Panc1 (cell line): ENCODE measurements at regions of chr2 and their contacts with region 1.

Region 1: DNA sequence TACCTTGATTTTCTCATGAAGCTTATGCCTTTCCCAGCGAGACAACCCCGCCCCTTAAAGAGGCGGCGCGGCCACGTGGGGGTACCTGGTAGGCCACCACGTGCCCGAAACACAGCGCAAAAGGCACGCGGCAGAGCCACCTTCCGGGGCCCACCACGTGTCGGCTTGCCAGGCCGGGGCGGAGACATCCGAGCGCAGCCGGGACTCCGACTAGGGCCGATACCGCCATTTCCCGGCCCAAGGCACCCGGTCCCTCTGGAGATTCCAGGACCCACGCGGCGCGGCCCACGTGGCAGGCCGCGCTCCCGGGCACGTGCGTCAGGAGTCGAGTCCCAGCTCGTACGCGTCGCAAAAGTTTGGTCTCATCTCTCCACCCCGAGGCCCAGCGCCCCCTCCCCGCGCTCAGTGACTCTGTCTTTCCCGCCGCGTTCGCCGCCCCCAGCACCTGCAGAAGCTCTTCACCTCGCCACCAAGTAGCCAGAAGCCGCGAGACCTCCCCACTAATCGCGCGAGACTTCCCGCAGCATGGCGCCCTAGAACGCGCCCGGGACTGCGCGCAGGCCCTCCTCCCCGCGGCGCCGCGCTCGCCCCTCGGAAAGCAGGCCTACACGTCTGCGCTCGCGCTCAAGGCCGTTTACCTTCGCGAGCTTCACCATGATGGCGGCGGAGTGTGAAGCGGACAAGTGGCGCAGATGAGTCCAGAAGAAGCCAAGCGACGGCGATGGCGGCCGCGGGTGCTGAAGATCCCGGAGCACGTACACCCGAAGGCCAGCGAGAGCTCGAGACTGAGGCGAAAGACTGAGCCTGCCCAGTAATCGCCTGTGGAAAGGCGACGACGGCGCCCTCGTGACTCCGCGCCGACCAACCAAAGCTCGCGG is at the start of gene NCL:
- DNase-seq: peak; percentile 80
- ATAC-seq: peak; percentile 95
- H3K4me3 ChIP-seq: peak within 1 kb of the TSS; percentile 93 to 100
- H3K27ac ChIP-seq: peak within 1 kb of the TSS; percentile 98
- H3K4me1 ChIP-seq: peaks cover 19% of the 10 kb centered on the region
- H3K27me3 ChIP-seq: no peaks in the 10 kb centered on the region
- CTCF ChIP-seq: no peak
- total RNA-seq, gene NCL: 778 TPM

Region 2: GRCh38 chr2:231425291-231425810 is 38.6 kb before region 1 on chr2:
- CTCF ChIA-PET with region 1: no interaction called
- POLR2A ChIA-PET with region 1: interaction called, 10 read pairs
- in situ Hi-C with region 1: no loop called
- intact Hi-C with region 1: no loop called
- DNase-seq: no peak
- ATAC-seq: peak; percentile 55
- H3K4me3 ChIP-seq: no peak overlapping the region
- H3K27ac ChIP-seq: peak overlapping the region; percentile 27; the same call in 1 of the 2 replicates
- H3K4me1 ChIP-seq: peaks cover 10% of the 10 kb centered on the region
- H3K27me3 ChIP-seq: no peaks in the 10 kb centered on the region
- CTCF ChIP-seq: no peak

Region 3: GRCh38 chr2:231436957-231437356 is 27.0 kb before region 1 on chr2:
- CTCF ChIA-PET with region 1: no interaction called
- POLR2A ChIA-PET with region 1: interaction called, 17 read pairs
- in situ Hi-C with region 1: no loop called
- intact Hi-C with region 1: no loop called
- DNase-seq: no peak
- ATAC-seq: no peak; the same call in 1 of the 2 replicates
- H3K4me3 ChIP-seq: no peak overlapping the region
- H3K27ac ChIP-seq: no peak overlapping the region
- H3K4me1 ChIP-seq: no peaks in the 10 kb centered on the region
- H3K27me3 ChIP-seq: no peaks in the 10 kb centered on the region
- CTCF ChIP-seq: no peak

Region 4: GRCh38 chr2:231604685-231605606 is 141.0 kb after region 1 on chr2:
- CTCF ChIA-PET with region 1: interaction called, 11 read pairs
- POLR2A ChIA-PET with region 1: no interaction called
- in situ Hi-C with region 1: no loop called
- intact Hi-C with region 1: no loop called
- DNase-seq: peak; percentile 53
- ATAC-seq: peak; percentile 93
- H3K4me3 ChIP-seq: peak overlapping the region; percentile 52 to 55
- H3K27ac ChIP-seq: peak overlapping the region; percentile 65
- H3K4me1 ChIP-seq: peaks cover 13% of the 10 kb centered on the region
- H3K27me3 ChIP-seq: no peaks in the 10 kb centered on the region
- CTCF ChIP-seq: no peak

Region 5: GRCh38 chr2:232042911-232043564 is 579.1 kb after region 1 on chr2:
- CTCF ChIA-PET with region 1: no interaction called
- POLR2A ChIA-PET with region 1: no interaction called
- in situ Hi-C with region 1: no loop called
- intact Hi-C with region 1: no loop called
- DNase-seq: no peak
- ATAC-seq: no peak
- H3K4me3 ChIP-seq: no peak overlapping the region
- H3K27ac ChIP-seq: no peak overlapping the region
- H3K4me1 ChIP-seq: no peaks in the 10 kb centered on the region
- H3K27me3 ChIP-seq: no peaks in the 10 kb centered on the region
- CTCF ChIP-seq: no peak